ENCODE measurements at regions of chr2 and their contacts with region 1.

Region 1: GRCh38 chr2:201257956-201258665 is 2.2 kb upstream of the CASP8 start:
- DNase-seq: peak; percentile 96
- ATAC-seq: peak; percentile 66
- H3K4me3 Mint-ChIP-seq: peak overlapping the region; percentile 79
- H3K27ac Mint-ChIP-seq: peak overlapping the region; percentile 98
- H3K4me1 Mint-ChIP-seq: peaks cover 76% of the 10 kb centered on the region
- H3K27me3 Mint-ChIP-seq: no peaks in the 10 kb centered on the region

Region 2: DNA sequence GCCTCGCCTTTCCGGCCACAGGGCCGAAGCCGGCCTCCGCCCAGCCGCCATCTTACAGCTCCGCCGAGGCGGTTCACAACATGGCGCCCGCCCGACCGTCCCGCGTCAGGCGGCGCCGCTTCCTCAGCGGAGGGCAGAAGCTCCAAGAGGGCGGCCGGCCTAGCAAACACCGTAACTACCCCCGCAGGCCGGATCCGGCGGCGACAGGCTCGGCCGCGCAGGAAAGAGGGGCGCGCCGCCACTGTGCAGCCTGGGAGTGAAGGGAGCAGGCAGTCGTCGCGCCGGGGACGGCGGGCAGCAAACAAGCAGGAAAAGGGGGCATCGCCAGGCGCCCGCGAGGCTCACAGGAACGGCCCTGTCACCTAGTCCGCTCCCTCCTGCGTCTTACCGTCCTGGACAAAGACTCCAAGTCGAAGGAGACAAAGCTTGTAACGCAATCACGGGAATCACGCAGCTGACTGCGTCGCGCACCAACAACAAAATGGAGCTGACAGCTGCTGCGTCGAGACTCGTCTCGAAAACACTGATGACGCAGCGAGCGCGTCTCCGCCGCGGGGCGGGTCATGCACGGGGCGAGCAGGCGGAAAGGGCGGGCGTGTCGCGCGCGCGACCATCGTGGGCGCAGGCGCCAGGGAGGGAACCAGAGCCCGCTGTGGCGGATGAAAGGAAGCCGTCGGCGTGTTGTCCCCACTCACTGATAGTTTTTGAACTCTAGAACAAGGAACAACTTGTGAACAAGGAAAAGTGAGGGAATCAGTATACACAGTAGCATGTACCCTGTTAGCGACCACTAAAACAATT is 393.7 kb before region 1 on chr2 and contains the start of gene CLK1:
- CTCF ChIA-PET with region 1: no interaction called
- POLR2A ChIA-PET with region 1: interaction called, 3 read pairs
- intact Hi-C with region 1: loop called in 1 of 2 experiments (anchors 2 kb)
- DNase-seq: peak; percentile 98
- ATAC-seq: peak; percentile 77
- H3K4me3 Mint-ChIP-seq: peak within 1 kb of the TSS; percentile 87
- H3K27ac Mint-ChIP-seq: peak within 1 kb of the TSS; percentile 99
- H3K4me1 Mint-ChIP-seq: peaks cover 26% of the 10 kb centered on the region
- H3K27me3 Mint-ChIP-seq: no peaks in the 10 kb centered on the region
- total RNA-seq, gene CLK1: 86.4 to 99.3 TPM

Region 3: GRCh38 chr2:201130524-201131186 is 127.5 kb before region 1 on chr2:
- CTCF ChIA-PET with region 1: no interaction called
- POLR2A ChIA-PET with region 1: interaction called, 8 read pairs
- intact Hi-C with region 1: loop called (anchors 1 to 2 kb)
- DNase-seq: peak; percentile 62
- ATAC-seq: peak; percentile 48
- H3K4me3 Mint-ChIP-seq: peak overlapping the region; percentile 81
- H3K27ac Mint-ChIP-seq: peak overlapping the region; percentile 95
- H3K4me1 Mint-ChIP-seq: peaks cover 65% of the 10 kb centered on the region
- H3K27me3 Mint-ChIP-seq: no peaks in the 10 kb centered on the region

Region 4: DNA sequence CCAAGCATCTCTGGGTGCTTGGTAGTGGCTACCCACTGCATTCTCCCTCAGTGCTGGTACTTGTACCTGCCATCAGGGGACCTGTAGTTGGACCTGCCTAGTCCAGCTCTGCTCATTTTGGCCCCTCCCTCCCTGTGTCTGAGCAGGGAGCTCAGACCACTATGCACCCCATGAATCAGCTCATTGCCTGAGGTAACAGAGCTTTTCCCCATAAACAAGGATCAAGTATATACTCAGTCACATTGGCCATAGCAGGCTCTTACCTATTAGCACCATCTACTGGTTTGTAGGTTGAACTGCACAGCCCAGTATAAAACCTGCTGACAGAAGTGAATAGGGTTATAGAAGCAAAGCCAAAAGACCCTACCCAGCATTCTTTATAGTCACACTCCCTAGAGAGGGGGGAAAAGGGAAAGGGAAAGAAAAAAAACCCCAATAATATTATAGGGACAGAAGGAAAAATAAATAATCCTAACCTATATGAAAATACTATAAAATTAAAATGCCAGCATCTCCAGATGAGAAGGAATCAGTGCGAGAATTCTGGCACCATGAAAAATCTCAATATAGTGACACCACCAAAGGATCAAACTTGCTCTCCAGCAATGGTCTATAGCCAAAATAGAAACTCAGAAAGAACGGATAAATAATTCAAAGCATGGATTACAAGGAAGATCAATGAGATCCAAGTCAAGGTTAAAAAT is 105.9 kb after region 1 on chr2:
- CTCF ChIA-PET with region 1: interaction called, 9 read pairs
- POLR2A ChIA-PET with region 1: no interaction called
- intact Hi-C with region 1: loop called in 1 of 2 experiments (anchors 2 kb)
- DNase-seq: peak; percentile 27
- ATAC-seq: peak; percentile 91
- H3K4me3 Mint-ChIP-seq: no peak overlapping the region
- H3K27ac Mint-ChIP-seq: peak overlapping the region; percentile 44
- H3K4me1 Mint-ChIP-seq: peaks cover 34% of the 10 kb centered on the region
- H3K27me3 Mint-ChIP-seq: no peaks in the 10 kb centered on the region

Region 5: GRCh38 chr2:201451292-201452057 is 193.4 kb after region 1 on chr2 and contains the starts of genes STRADB and TRAK2:
- CTCF ChIA-PET with region 1: interaction called, 4 read pairs
- POLR2A ChIA-PET with region 1: interaction called, 3 read pairs
- intact Hi-C with region 1: loop called (anchors 1 to 2 kb)
- DNase-seq: peak; percentile 98
- ATAC-seq: peak; percentile 91
- H3K4me3 Mint-ChIP-seq: peak within 1 kb of the TSS; percentile 95
- H3K27ac Mint-ChIP-seq: peak within 1 kb of the TSS; percentile 97
- H3K4me1 Mint-ChIP-seq: peaks cover 44% of the 10 kb centered on the region
- H3K27me3 Mint-ChIP-seq: no peaks in the 10 kb centered on the region
- total RNA-seq, gene STRADB: 20.5 to 21.8 TPM
- total RNA-seq, gene TRAK2: 22.5 to 25.6 TPM

Region 6: DNA sequence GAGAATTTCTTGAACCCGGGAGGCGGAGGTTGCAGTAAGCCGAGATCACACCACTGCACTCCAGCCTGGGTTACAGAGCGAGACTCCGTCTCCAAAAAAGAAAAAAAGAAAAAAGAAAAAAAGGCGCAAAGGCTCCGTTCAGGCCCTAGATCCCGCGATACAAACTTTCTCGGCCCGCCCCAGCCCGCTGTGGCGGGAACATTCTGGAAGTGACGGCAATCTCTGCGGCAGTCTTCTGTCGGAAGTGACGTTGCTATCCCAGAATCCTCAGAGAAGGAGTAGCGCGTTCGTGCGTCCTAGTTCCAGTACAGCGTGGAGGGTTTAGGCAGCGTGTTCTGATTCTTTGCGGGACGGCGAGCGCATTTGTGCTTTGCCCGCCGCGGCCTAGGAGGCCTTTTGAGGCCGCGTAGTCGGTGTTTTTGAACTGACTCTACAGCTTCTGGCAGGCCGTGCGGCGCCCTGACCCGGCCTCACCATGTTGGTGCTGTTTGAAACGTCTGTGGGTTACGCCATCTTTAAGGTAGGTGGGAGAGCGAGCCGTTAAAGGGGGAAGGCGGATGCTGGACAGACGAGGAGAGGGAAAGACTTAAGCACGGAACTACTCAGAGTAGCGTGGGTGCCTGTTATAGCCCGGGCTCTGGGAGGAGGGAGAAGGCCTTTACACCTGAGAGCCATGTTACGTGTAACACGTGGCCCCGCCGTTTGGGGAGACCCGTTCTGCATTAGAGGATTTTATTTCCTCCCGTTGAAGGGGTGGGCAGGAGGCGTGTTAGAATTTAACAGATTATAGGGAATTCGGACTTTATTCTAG is 1007.6 kb after region 1 on chr2 and contains the start of gene NOP58:
- CTCF ChIA-PET with region 1: no interaction called
- POLR2A ChIA-PET with region 1: no interaction called
- intact Hi-C with region 1: loop called (anchors 5 kb)
- DNase-seq: peak; percentile 95
- ATAC-seq: peak; percentile 84
- H3K4me3 Mint-ChIP-seq: no peak within 1 kb of the TSS
- H3K27ac Mint-ChIP-seq: peak within 1 kb of the TSS; percentile 78
- H3K4me1 Mint-ChIP-seq: peaks cover 15% of the 10 kb centered on the region
- H3K27me3 Mint-ChIP-seq: no peaks in the 10 kb centered on the region
- total RNA-seq, gene NOP58: 160 to 180 TPM